ENCODE measurements at regions of chr14 and their contacts with region 1.

Region 1: GRCh38 chr14:67514650-67515385 is 18.3 kb upstream of the PLEKHH1 start:
- DNase-seq: peak; percentile 50
- ATAC-seq: peak; percentile 55 to 67

Region 2: DNA sequence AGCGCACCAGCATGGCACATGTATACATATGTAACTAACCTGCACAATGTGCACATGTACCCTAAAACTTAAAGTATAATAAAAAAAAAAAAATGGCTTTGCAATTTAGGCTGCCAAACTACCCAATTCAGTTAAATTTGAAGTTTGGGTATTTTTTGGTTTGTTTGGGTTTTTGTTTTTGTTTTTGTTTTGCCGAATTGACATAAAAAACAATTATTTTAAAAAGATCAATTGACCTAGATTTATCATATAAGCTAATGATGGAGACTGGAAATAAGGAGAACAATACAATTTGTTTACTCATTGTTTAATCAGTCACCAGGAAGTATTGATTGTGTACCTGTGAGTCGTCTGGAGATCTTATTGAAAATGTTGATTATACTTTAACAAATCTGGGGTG is 387.6 kb before region 1 on chr14:
- intact Hi-C with region 1: no loop called
- DNase-seq: no peak
- ATAC-seq: no peak

Region 3: GRCh38 chr14:67557126-67557525 is 42.3 kb after region 1 on chr14:
- intact Hi-C with region 1: loop called in 1 of 2 experiments (anchors 5 kb)
- DNase-seq: no peak
- ATAC-seq: no peak

Region 4: DNA sequence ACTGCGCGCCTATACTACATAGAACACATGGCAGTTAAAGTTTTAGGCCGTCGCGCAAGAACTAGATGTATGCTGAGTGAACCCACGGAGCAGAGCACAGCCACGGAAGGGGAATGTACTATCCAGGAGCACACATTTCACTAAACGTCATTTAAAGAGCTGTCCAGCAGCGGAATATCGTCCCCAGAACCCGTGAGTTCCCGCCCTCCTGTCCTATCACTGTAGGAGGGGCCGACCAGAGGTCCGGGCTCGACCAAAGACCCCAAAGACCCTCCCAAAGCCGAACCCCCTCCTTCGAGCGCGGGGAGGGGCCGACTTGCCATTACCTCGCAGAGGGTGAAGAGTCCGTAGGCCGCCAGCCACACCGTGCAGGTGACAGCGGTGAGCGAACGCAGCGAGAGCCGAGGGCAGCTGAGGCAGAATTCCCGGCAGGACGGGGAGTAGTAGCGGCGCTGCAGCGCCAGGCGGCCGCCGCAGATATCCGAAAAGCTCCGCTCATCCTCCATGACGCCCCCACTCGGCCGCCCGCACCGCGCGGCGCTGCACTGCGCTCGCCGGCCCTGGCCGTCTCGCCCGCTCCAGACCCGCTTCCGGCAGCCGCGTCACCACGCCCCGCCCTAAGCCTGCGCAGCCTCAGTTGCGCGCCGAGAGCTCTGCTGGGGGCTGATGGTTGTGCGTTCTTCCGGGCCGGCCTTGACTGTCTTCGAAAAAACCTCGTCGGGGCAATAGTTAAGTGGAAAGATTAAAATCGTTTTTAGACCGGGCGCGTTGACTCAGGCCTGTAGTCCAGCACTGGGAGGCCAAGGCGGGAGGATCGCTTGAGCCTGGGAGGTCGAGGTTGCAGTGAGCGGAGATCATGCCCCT is 85.1 kb after region 1 on chr14 and contains the start of gene PIGH:
- intact Hi-C with region 1: no loop called
- DNase-seq: peak; percentile 92
- ATAC-seq: peak; percentile 100
- total RNA-seq, gene PIGH: 13.0 to 14.2 TPM

Region 5: DNA sequence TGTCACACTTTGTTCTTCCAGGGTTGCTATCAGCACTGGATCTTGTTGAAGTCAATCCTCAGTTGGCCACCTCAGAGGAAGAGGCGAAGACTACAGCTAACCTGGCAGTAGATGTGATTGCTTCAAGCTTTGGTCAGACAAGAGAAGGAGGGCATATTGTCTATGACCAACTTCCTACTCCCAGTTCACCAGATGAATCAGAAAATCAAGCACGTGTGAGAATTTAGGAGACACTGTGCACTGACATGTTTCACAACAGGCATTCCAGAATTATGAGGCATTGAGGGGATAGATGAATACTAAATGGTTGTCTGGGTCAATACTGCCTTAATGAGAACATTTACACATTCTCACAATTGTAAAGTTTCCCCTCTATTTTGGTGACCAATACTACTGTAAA is 135.9 kb after region 1 on chr14:
- intact Hi-C with region 1: no loop called
- DNase-seq: no peak
- ATAC-seq: no peak

Region 6: DNA sequence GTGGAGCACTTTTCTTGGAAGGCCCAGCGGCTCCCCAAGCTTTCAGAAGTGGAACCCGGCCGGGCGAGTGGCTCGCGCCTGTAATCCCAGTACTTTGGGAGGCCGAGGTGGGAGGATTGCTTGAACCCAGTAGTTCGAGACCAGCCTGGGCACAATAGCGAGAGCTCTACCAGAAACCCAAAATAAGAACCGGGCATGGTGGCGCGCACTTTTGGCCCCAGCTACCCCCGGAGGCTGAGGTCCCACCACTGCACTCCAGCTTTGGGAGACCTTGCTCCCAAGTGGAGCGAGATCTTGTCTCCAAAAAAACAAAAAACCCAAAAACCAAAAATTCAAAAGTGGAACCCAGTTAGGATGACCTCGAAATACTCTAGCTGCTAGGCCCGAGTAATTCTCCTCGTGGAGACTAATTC is 160.4 kb after region 1 on chr14:
- intact Hi-C with region 1: no loop called
- DNase-seq: no peak
- ATAC-seq: no peak